ENCODE measurements at regions of chrX and their contacts with region 1.

Region 1: DNA sequence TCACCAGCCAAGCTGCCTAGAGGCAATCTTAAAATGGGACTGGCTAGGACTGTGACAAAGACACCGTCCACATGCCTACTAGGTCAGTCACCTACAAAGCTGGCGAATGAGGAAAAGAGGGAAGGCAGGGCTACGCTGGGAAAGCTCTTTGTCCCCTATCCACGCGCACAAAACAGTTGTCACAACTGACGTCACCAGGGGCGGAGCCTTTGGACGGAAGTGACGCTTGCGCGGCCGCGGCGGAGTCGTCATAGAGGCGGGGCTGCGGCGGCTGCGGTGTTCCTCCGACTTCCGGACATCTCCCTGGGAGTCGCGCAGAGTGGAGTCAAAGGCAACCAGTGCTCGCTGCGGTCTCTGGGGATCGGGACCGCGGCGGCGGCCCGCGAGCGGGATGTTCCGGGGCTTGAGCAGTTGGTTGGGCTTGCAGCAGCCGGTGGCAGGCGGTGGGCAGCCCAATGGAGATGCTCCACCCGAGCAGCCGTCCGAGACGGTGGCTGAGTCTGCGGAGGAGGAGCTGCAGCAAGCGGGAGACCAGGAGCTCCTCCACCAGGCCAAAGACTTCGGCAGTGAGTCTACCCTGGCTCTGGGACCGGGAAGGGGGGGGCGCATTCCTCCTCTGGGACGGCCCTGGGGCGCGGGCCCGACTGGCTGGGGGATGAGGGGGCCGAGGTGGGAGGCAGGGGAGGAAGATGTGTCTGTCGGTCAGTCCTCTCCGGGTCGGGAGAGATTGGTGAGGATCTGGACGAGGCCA is at the start of gene SYAP1:
- DNase-seq: peak; percentile 81 to 98 (median 92)
- ATAC-seq: peak; percentile 86
- H3K4me3 ChIP-seq: peak within 1 kb of the TSS; percentile 69
- H3K4me3 Mint-ChIP-seq: peak within 1 kb of the TSS; percentile 97
- H3K27ac ChIP-seq: peak within 1 kb of the TSS; percentile 89 to 96
- H3K27ac Mint-ChIP-seq: peak within 1 kb of the TSS; percentile 100
- H3K4me1 ChIP-seq: peaks cover 20% of the 10 kb centered on the region
- H3K4me1 Mint-ChIP-seq: peaks cover 44% of the 10 kb centered on the region
- H3K27me3 ChIP-seq: no peaks in the 10 kb centered on the region
- H3K27me3 Mint-ChIP-seq: no peaks in the 10 kb centered on the region
- CTCF ChIP-seq: no peak
- total RNA-seq, gene SYAP1: 60.2 to 65.2 TPM

Region 2: GRCh38 chrX:15854712-15855567 is 864.6 kb before region 1 on chrX and contains the start of gene AP1S2:
- CTCF ChIA-PET with region 1: no interaction called
- POLR2A ChIA-PET with region 1: interaction called, 9 read pairs
- intact Hi-C with region 1: loop called in 1 of 2 experiments (anchors 10 kb)
- DNase-seq: peak; percentile 84 to 99 (median 94)
- ATAC-seq: peak; percentile 94
- H3K4me3 ChIP-seq: peak within 1 kb of the TSS; percentile 81
- H3K4me3 Mint-ChIP-seq: peak within 1 kb of the TSS; percentile 97
- H3K27ac ChIP-seq: peak within 1 kb of the TSS; percentile 87 to 89
- H3K27ac Mint-ChIP-seq: peak within 1 kb of the TSS; percentile 100
- H3K4me1 ChIP-seq: peaks cover 5% of the 10 kb centered on the region
- H3K4me1 Mint-ChIP-seq: peaks cover 38% of the 10 kb centered on the region
- H3K27me3 ChIP-seq: no peaks in the 10 kb centered on the region
- H3K27me3 Mint-ChIP-seq: no peaks in the 10 kb centered on the region
- CTCF ChIP-seq: no peak
- total RNA-seq, gene AP1S2: 20.0 to 20.8 TPM

Region 3: GRCh38 chrX:16695079-16695676 is 24.3 kb before region 1 on chrX:
- CTCF ChIA-PET with region 1: no interaction called
- POLR2A ChIA-PET with region 1: no interaction called
- intact Hi-C with region 1: no loop called
- DNase-seq: peak; percentile 19 to 78 (median 55)
- ATAC-seq: peak; percentile 74
- H3K4me3 ChIP-seq: no peak overlapping the region
- H3K4me3 Mint-ChIP-seq: no peak overlapping the region
- H3K27ac ChIP-seq: no peak overlapping the region
- H3K27ac Mint-ChIP-seq: no peak overlapping the region
- H3K4me1 ChIP-seq: no peaks in the 10 kb centered on the region
- H3K4me1 Mint-ChIP-seq: no peaks in the 10 kb centered on the region
- H3K27me3 ChIP-seq: no peaks in the 10 kb centered on the region
- H3K27me3 Mint-ChIP-seq: no peaks in the 10 kb centered on the region
- CTCF ChIP-seq: peak; percentile 71

Region 4: GRCh38 chrX:16756724-16757123 is 37.2 kb after region 1 on chrX:
- CTCF ChIA-PET with region 1: no interaction called
- POLR2A ChIA-PET with region 1: no interaction called
- intact Hi-C with region 1: loop called in 1 of 2 experiments (anchors 5 kb)
- DNase-seq: no peak
- ATAC-seq: no peak
- H3K4me3 ChIP-seq: no peak overlapping the region
- H3K4me3 Mint-ChIP-seq: no peak overlapping the region
- H3K27ac ChIP-seq: no peak overlapping the region
- H3K27ac Mint-ChIP-seq: no peak overlapping the region
- H3K4me1 ChIP-seq: no peaks in the 10 kb centered on the region
- H3K4me1 Mint-ChIP-seq: no peaks in the 10 kb centered on the region
- H3K27me3 ChIP-seq: no peaks in the 10 kb centered on the region
- H3K27me3 Mint-ChIP-seq: no peaks in the 10 kb centered on the region
- CTCF ChIP-seq: no peak

Region 5: GRCh38 chrX:16786139-16786790 is 66.8 kb after region 1 on chrX and contains the start of gene TXLNG:
- CTCF ChIA-PET with region 1: no interaction called
- POLR2A ChIA-PET with region 1: interaction called, 4 read pairs
- intact Hi-C with region 1: loop called (anchors 2 to 5 kb)
- DNase-seq: peak; percentile 85 to 98 (median 94)
- ATAC-seq: peak; percentile 94
- H3K4me3 ChIP-seq: peak within 1 kb of the TSS; percentile 76
- H3K4me3 Mint-ChIP-seq: peak within 1 kb of the TSS; percentile 97
- H3K27ac ChIP-seq: peak within 1 kb of the TSS; percentile 84 to 87
- H3K27ac Mint-ChIP-seq: peak within 1 kb of the TSS; percentile 84
- H3K4me1 ChIP-seq: peaks cover 12% of the 10 kb centered on the region
- H3K4me1 Mint-ChIP-seq: peaks cover 29% of the 10 kb centered on the region
- H3K27me3 ChIP-seq: no peaks in the 10 kb centered on the region
- H3K27me3 Mint-ChIP-seq: no peaks in the 10 kb centered on the region
- CTCF ChIP-seq: no peak
- total RNA-seq, gene TXLNG: 17.2 to 17.5 TPM